Endothelial cell of umbilical vein (primary cell): ENCODE measurements at regions of chr3 and their contacts with region 1.

Region 1: DNA sequence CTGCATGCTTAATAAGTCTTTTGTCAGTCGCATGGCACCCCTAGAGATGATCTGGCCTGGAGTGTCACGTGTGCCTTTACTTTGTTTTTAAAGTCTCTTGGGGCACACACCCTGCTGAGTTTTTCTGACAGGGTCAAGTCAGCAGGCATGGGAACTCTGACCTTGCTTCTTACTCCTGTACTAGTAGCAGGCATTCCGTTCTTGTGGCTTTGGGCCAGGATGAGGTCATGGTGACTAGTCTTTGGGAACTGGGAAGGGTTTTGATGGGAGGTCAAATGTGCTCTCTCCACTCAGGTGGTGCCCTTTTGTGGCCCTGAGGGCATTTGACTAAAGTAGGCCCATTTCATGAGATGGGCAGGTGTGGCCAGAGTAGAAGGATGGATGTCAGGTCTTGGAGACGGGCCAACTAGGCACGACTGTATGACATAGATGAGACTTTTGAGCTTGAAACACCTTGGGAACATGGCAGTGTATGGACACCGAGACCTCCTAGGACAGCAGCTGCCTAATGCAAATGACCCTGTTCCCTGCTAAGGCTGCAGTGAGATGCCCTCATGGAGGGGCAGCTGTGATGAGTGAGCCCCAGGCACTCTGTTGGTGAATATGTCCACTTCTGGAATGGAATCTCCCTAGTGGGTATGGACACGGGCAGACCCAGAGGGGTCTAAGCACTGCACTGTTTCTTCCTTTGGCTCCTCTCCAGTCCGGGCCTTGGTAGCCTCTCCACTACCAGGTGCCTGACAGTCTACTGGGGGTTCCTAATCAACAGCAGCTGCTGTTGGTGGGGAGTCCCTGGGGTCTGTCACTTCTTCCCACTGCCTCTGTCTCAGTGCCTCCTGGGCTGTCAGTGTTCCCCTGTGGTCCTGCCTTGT is 16.4 kb downstream of the SRPRB start:
- DNase-seq: peak; percentile 44
- H3K4me3 ChIP-seq: no peak overlapping the region
- H3K27ac ChIP-seq: no peak overlapping the region
- H3K4me1 ChIP-seq: no peaks in the 10 kb centered on the region
- H3K27me3 ChIP-seq: no peaks in the 10 kb centered on the region
- CTCF ChIP-seq: peak in 1 of 2 donors; percentile 18
- POLR2A ChIP-seq: no peak

Region 2: GRCh38 chr3:133763797-133764683 is 58.0 kb before region 1 on chr3:
- CTCF ChIA-PET with region 1: no interaction called
- POLR2A ChIA-PET with region 1: no interaction called
- dilution Hi-C with region 1: no loop called
- intact Hi-C with region 1: no loop called
- DNase-seq: no peak
- H3K4me3 ChIP-seq: no peak overlapping the region
- H3K27ac ChIP-seq: no peak overlapping the region
- H3K4me1 ChIP-seq: no peaks in the 10 kb centered on the region
- H3K27me3 ChIP-seq: peaks cover 8 to 10% of the 10 kb centered on the region in 2 experiments
- CTCF ChIP-seq: no peak
- POLR2A ChIP-seq: no peak

Region 3: GRCh38 chr3:134228035-134228434 is 406.0 kb after region 1 on chr3:
- CTCF ChIA-PET with region 1: interaction called, 10 read pairs
- POLR2A ChIA-PET with region 1: no interaction called
- dilution Hi-C with region 1: no loop called
- intact Hi-C with region 1: no loop called
- DNase-seq: no peak
- H3K4me3 ChIP-seq: no peak overlapping the region
- H3K27ac ChIP-seq: no peak overlapping the region
- H3K4me1 ChIP-seq: peaks cover 3% of the 10 kb centered on the region
- H3K27me3 ChIP-seq: no peaks in the 10 kb centered on the region
- CTCF ChIP-seq: no peak
- POLR2A ChIP-seq: no peak